Endothelial cell of umbilical vein (primary cell): ENCODE measurements at regions of chr10 and their contacts with region 1.

Region 1: DNA sequence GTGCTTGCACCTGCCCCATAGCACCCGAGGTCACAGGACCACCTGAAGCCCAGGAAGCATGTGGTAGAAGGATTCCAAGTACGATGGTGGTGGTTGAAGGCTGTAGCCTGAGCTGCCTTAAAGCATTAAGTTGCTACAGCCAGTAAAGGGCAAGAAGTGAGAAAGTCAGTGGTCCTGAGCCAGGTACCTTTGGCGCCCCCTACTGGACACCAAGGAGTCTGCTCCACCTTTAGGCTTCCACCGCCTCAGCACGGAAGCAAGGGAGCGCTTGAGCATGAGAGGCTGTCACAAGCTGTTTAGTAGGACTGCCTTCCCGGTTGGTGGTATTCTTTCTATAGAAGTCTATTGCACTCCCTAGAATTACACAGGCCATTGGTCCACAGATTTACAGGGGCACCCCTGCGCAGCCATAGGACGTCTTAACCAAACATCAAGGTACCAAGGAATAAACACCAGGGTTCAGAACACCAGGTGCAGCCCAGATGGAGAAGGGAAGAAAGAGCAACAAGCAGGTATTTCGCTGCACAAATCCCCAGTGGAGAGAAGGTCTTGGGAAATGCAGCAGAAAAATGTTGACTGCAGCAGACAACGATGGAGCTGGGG is 2.2 kb downstream of the CRTAC1 start:
- DNase-seq: peak; percentile 37
- H3K4me3 ChIP-seq: no peak overlapping the region
- H3K27ac ChIP-seq: no peak overlapping the region
- H3K4me1 ChIP-seq: no peaks in the 10 kb centered on the region
- H3K27me3 ChIP-seq: peaks cover 41 to 48% of the 10 kb centered on the region in 2 experiments
- CTCF ChIP-seq: peak; percentile 72 to 81
- POLR2A ChIP-seq: no peak

Region 2: DNA sequence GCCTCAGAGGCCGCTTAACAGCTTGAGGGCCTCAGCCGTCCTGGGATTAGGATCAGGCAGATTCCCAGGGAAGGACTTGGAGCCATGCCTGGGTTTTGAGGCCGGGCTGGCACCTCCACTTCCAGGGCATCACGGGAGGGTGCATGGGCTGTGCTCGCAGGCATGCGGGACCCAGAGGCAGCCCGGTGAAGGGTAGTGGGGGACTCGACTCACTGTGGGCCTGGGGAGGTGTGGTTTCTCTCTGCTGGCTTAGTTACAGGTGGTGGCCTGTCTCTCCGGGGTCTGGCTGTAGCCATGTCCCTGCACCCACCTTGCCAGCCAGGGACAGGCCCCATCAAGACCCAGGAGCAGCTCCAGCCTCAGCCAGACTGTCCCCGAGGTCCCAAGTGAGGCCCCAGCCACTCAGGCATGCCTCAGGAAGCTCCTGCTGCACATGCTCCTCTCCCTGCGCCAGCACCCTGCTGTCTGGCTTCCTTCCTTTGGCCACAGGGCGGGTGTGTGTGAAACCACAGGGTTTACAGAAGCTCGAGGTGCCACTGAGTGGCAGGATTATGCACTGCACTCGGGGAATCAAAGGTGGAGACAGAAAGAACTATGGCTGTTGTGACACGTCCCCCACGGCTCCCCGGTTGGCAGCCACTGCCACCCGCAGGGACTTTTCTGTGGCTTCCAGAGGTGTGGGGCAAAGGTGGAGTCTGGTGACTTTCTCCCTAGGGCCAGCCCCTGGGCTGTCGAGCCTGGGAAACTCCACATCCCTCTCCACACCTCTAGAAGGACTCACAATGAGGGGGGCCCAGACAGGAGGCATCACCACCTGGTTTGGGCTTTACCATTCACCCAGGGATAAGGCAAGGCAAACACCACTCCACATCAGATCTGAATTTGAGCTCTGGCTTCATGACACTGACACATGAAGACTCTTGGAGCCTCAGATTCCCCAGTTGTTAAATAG is 158.9 kb before region 1 on chr10:
- CTCF ChIA-PET with region 1: no interaction called
- POLR2A ChIA-PET with region 1: no interaction called
- dilution Hi-C with region 1: no loop called
- intact Hi-C with region 1: no loop called
- DNase-seq: peak; percentile 78
- H3K4me3 ChIP-seq: no peak overlapping the region
- H3K27ac ChIP-seq: no peak overlapping the region
- H3K4me1 ChIP-seq: peaks cover 5% of the 10 kb centered on the region
- H3K27me3 ChIP-seq: peaks cover 13 to 15% of the 10 kb centered on the region in 2 experiments
- CTCF ChIP-seq: peak; percentile 73 to 75
- POLR2A ChIP-seq: peak; percentile 38

Region 3: DNA sequence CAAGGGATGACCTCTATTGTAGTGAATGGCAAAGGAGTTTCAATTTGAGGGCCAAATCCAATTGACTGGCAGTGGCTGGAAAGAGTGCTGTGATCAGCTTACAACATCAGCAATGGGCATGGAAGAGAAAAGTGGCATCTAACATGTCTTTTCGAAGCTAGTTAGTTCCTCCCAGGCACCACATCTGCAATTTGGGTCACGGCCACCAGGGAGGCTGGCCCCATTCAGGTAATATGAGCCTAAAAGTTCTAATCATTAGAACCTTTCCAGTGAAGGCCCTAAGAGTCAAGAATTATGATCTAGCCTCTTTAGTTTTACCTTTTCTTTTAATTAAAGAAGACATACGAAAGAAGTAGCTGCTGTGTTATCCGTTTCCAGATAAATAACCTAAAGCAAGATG is 15.1 kb before region 1 on chr10:
- CTCF ChIA-PET with region 1: interaction called, 15 read pairs
- POLR2A ChIA-PET with region 1: no interaction called
- dilution Hi-C with region 1: no loop called
- intact Hi-C with region 1: no loop called
- DNase-seq: no peak
- H3K4me3 ChIP-seq: no peak overlapping the region
- H3K27ac ChIP-seq: no peak overlapping the region
- H3K4me1 ChIP-seq: no peaks in the 10 kb centered on the region
- H3K27me3 ChIP-seq: peaks cover 2 to 4% of the 10 kb centered on the region in 2 experiments
- CTCF ChIP-seq: no peak
- POLR2A ChIP-seq: no peak

Region 4: DNA sequence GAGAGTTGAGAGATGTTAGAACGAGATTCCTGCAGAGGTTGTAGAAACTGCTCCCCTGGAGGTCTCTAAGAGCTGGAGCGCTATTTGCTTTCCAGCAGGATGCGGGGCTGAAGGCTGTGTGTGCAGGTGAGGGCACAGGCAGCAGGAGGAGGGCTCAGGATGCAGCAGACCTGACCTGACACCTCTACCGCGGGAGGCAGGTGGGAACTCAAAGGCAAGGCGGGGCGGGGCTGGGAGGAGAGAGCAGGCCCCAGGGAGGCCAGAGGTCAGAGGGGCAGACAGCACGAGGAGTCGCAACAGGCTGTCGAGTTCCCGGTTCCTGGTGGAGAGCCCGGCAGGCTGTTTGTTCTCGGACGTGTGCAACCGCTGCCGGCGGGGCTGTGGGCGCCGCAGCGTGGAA is 10.0 kb after region 1 on chr10:
- CTCF ChIA-PET with region 1: interaction called, 81 read pairs
- POLR2A ChIA-PET with region 1: no interaction called
- dilution Hi-C with region 1: no loop called
- intact Hi-C with region 1: no loop called
- DNase-seq: no peak
- H3K4me3 ChIP-seq: no peak overlapping the region
- H3K27ac ChIP-seq: no peak overlapping the region
- H3K4me1 ChIP-seq: no peaks in the 10 kb centered on the region
- H3K27me3 ChIP-seq: peaks cover 22 to 29% of the 10 kb centered on the region in 2 experiments
- CTCF ChIP-seq: no peak
- POLR2A ChIP-seq: no peak